Left ventricle myocardium inferior (tissue), 1 donor: ENCODE measurements at regions of chr17 and their contacts with region 1.

Region 1: DNA sequence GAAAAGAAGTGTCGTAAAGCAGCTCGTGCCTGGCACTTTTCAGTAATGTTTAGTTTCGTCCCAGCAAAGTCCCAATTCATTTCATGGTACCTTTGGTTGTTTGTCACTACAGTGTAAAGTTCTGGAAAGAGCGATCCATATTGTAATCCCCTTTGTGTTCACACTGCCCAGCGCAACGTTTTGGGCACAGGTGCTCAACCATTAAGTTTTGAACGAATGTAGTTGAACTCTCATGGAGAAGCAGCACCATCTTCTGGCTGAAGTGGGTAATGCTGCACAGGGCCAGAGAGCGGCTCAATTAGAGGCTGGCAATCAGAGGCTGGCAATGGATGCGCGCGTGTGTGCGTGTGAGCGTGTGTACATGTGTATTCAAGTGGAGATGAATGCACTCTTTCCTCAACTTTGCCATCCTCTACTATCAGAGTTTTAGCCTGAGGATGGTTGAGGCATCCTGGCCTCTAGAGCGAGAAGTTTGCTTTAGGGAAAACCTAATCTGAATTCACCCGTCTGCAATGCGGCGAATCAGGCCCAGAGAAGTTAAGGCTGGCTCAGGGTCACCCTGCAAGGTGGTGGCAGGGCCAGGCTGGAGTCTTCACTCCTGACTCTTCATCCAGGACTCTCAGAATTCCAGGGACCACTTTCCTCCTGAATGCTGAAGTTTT is 29.9 kb downstream of the DYNLL2 start:
- DNase-seq: peak; percentile 70
- H3K4me3 ChIP-seq: no peak overlapping the region
- H3K27ac ChIP-seq: no peak overlapping the region
- H3K4me1 ChIP-seq: no peaks in the 10 kb centered on the region
- H3K27me3 ChIP-seq: peaks cover 30% of the 10 kb centered on the region
- CTCF ChIP-seq: peak; percentile 99

Region 2: DNA sequence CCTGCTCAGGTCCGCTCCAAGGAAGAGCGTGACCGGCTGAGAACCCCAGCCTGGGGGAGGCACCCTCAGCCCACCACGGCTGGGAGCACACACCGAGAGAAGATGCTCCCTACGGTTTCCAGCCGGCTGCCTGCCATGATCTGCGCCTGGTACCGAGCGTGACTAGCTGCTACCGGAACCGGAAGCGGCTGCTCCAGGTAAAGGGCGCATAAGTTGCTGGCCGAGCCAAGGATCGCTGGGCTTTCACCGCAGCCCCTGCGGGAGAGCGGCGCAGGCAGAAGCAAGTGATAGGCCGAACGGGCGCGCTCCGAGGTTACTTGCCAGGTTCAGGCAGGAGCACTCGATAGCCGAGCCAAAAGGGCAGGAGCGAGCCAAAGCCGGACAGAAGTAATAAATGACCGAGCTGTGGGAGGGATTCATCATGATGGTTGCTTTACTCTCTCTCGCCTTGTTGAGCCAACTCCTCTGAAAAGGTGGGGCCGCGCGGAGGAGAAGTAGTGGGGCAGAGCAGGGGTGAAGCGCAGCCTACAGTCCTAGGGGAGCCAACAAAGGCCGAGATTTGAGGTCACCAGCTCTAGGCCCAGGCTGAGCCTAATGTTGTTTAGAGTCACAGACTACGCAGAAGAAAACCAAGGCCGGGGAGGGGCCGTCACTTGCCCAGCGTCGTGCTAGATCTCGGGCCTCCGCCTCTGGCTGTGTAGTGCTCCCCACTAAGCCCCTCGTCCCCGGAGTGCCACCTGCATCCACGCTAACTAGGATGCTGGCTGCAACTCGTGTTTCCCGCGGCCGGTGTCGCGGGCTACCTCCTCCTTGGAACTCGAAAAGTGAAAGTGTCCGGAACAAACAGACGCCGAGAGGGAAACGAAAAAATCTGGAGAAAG is 263.0 kb before region 1 on chr17 and contains the start of gene MRPS23:
- intact Hi-C with region 1: loop called (anchors 10 kb)
- DNase-seq: peak; percentile 97
- H3K4me3 ChIP-seq: peak within 1 kb of the TSS; percentile 99
- H3K27ac ChIP-seq: peak within 1 kb of the TSS; percentile 97
- H3K4me1 ChIP-seq: peaks cover 79% of the 10 kb centered on the region
- H3K27me3 ChIP-seq: no peaks in the 10 kb centered on the region
- CTCF ChIP-seq: no peak
- total RNA-seq, gene MRPS23: 89.4 TPM

Region 3: DNA sequence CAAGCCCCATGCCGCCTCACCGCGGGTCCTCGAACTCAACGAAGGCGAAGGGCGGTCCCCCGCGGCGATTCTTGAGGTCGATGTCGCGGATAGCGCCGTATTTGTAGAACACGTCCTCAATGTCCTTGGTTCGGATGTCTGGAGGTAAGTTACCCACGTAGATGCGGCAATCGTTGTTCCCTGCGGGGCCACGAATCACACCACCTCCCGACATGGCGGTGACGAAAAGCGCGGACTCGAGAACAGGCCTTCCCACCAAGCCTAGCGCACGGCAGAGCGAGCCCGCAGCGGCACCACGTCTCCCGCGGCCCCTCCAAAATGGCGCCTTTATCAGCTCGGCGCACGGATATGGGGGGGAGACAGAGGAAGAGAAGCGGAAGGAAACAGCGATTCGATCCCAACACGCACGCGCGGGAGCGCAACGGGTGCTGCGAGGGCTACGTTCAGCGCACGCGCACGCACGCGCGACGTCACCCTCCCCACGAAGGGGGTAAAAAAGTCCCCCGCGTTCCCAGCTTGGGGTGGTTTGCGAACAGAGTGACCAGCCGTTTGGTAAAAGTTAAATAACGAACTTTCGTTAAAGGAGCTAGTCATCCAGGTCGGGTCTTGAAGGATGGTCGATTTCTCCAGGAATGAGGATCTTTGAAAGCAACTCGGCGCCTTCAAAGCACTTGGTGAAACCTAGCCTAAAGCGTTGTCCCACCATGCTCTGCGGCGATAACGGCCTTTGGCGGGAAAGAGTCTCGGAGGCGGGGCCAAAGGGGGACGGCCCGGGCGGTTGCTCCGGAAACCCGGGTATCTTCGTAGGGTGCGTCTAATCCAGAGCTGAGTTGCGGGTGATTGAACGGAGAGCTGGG is 105.9 kb before region 1 on chr17 and contains the start of gene SRSF1:
- intact Hi-C with region 1: loop called (anchors 10 kb)
- DNase-seq: peak; percentile 98
- H3K4me3 ChIP-seq: peak within 1 kb of the TSS; percentile 96
- H3K27ac ChIP-seq: peak within 1 kb of the TSS; percentile 98
- H3K4me1 ChIP-seq: peaks cover 60% of the 10 kb centered on the region
- H3K27me3 ChIP-seq: no peaks in the 10 kb centered on the region
- CTCF ChIP-seq: no peak
- total RNA-seq, gene SRSF1: 92.4 TPM